ENCODE measurements at regions of chr22 and their contacts with region 1.

Region 1: GRCh38 chr22:17628304-17629166 is at the start of gene ATP6V1E1:
- DNase-seq: peak; percentile 96
- H3K4me3 ChIP-seq: peak within 1 kb of the TSS; percentile 69 to 97 (median 93)
- H3K27ac ChIP-seq: peak within 1 kb of the TSS; percentile 97
- H3K4me1 ChIP-seq: peaks cover 21% of the 10 kb centered on the region
- H3K27me3 ChIP-seq: no peaks in the 10 kb centered on the region
- CTCF ChIP-seq: no peak
- total RNA-seq, gene ATP6V1E1: 118 to 148 TPM

Region 2: DNA sequence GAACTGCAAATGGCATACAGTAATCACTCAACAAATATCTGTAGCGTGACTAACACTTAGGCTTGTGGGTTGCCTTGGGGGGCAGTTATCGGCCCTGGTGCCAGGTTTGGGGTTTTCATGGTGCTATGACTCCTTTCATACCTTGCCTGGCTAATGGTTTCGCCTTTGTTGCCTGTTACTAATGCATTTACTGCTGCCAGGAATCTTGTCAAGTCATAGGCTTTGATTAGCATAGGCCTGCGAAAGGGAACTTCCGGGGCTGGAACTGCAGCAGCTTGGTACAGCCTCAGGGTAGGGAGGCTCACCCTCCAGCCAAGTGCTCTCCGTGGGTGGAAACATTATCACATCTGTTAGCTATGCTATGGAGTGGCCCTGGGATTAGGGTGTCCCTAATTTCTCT is 52.1 kb before region 1 on chr22:
- CTCF ChIA-PET with region 1: no interaction called
- dilution Hi-C with region 1: no loop called
- in situ Hi-C with region 1: loop called (anchors 5 to 10 kb)
- intact Hi-C with region 1: loop called (anchors 1 kb)
- DNase-seq: peak; percentile 99
- H3K4me3 ChIP-seq: no peak overlapping the region
- H3K27ac ChIP-seq: peak overlapping the region; percentile 30
- H3K4me1 ChIP-seq: peaks cover 16% of the 10 kb centered on the region
- H3K27me3 ChIP-seq: no peaks in the 10 kb centered on the region
- CTCF ChIP-seq: no peak

Measured in mammary epithelial cell (primary cell).